BJ (cell line): ENCODE measurements at regions of chr9 and their contacts with region 1.

Region 1: GRCh38 chr9:20356403-20357035 is 265.8 kb downstream of the MLLT3 start:
- DNase-seq: peak; percentile 41
- H3K4me3 ChIP-seq: no peak overlapping the region
- H3K27me3 ChIP-seq: no peaks in the 10 kb centered on the region
- CTCF ChIP-seq: peak; percentile 78

Region 2: DNA sequence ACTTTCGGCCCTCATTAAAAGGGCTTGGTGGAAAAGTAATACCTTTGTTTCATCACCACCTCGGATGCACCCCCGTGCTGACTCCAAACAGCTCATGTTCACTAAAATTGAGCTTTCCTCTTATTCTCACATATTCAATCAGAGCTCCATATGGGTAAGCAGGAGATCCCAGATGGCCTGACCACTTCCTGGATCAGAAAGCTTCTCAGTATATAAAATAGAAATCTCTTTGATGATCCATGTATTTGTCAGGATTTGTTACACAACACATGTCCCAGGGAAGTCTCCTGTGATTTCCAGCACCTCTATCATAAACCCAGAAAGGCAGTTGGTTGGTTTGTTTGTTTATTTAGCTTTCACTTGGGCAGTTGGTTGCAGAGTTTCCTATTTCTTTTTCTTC is 136.2 kb before region 1 on chr9:
- CTCF ChIA-PET with region 1: no interaction called
- POLR2A ChIA-PET with region 1: no interaction called
- DNase-seq: no peak
- H3K4me3 ChIP-seq: no peak overlapping the region
- H3K27me3 ChIP-seq: peaks cover 3% of the 10 kb centered on the region; the same call in 1 of the 2 replicates
- CTCF ChIP-seq: no peak

Region 3: DNA sequence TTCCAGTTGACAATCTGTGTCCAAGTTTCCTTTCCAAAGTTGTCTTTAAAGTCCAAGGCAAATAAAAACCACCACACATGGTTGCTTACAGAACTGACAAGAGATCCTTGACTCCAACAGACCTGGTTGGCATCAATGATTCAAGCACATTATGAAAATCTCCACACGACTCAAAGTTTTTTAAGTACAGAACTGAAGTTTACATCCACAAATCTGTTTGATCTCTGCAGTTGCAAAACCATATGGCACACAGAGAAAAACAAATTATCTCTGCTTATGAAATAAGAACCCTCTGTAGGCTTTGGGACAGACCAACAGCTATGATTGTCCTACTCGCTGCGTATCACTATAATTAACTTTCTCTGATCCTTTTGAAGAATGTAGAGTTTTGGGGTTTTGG is 205.0 kb after region 1 on chr9:
- CTCF ChIA-PET with region 1: no interaction called
- POLR2A ChIA-PET with region 1: interaction called, 14 read pairs
- DNase-seq: no peak
- H3K4me3 ChIP-seq: no peak overlapping the region
- H3K27me3 ChIP-seq: no peaks in the 10 kb centered on the region
- CTCF ChIP-seq: no peak